T-cell (primary cell): ENCODE measurements at regions of chr6 and their contacts with region 1.

Region 1: GRCh38 chr6:722077-722524 is 29.2 kb upstream of the EXOC2 start:
- DNase-seq: peak; percentile 11 to 82 (median 58)
- ATAC-seq: peak; percentile 69 to 84 (median 82)
- H3K4me3 ChIP-seq: no peak overlapping the region
- H3K4me3 Mint-ChIP-seq: no peak overlapping the region
- H3K27ac ChIP-seq: no peak overlapping the region
- H3K27ac Mint-ChIP-seq: no peak overlapping the region
- H3K4me1 ChIP-seq: peaks cover 0 to 2% of the 10 kb centered on the region in 2 experiments
- H3K4me1 Mint-ChIP-seq: peaks cover 0 to 8% (median 7%) of the 10 kb centered on the region in 3 donors
- H3K27me3 ChIP-seq: peaks cover 7 to 8% of the 10 kb centered on the region in 2 experiments
- H3K27me3 Mint-ChIP-seq: peaks cover 6 to 18% of the 10 kb centered on the region in 2 donors

Region 2: GRCh38 chr6:710601-711571 is 11.2 kb before region 1 on chr6:
- CTCF ChIA-PET with region 1: interaction called, 4 to 11 read pairs
- POLR2A ChIA-PET with region 1: no interaction called
- DNase-seq: peak in 34 of 35 experiments; percentile 10 to 75 (median 28)
- ATAC-seq: peak; percentile 88 to 90 (median 89)
- H3K4me3 ChIP-seq: peak overlapping the region; percentile 68 to 79
- H3K4me3 Mint-ChIP-seq: peak overlapping the region; percentile 96 to 100 (median 98)
- H3K27ac ChIP-seq: peak overlapping the region; percentile 80
- H3K27ac Mint-ChIP-seq: peak overlapping the region; percentile 99
- H3K4me1 ChIP-seq: peaks cover 6% of the 10 kb centered on the region in 2 experiments
- H3K4me1 Mint-ChIP-seq: peaks cover 18 to 28% (median 23%) of the 10 kb centered on the region in 3 donors
- H3K27me3 ChIP-seq: peaks cover 0 to 10% of the 10 kb centered on the region in 2 experiments
- H3K27me3 Mint-ChIP-seq: peaks cover 2 to 11% of the 10 kb centered on the region in 2 donors

Region 3: DNA sequence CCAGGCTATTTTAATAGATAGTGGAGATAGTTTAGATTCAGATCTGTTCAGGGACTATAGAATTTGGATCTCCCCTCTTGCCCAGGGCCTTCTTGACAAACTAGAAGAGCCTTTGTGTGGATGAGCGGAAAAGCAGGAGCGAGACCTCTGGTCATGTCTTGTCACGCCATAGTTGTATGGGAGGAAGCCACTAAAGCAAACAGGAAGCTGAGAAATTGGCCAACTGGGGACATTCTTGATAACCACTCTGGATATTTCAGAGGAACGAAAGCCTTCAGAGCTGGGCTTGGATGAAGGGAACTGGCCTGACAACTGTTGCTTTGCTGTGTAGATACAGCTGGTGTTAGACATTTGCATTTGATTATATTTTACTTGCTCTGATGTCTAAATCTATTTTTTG is 24.9 kb after region 1 on chr6:
- CTCF ChIA-PET with region 1: no interaction called
- POLR2A ChIA-PET with region 1: no interaction called
- DNase-seq: no peak
- ATAC-seq: no peak
- H3K4me3 ChIP-seq: no peak overlapping the region
- H3K4me3 Mint-ChIP-seq: no peak overlapping the region
- H3K27ac ChIP-seq: no peak overlapping the region
- H3K27ac Mint-ChIP-seq: no peak overlapping the region
- H3K4me1 ChIP-seq: no peaks in the 10 kb centered on the region
- H3K4me1 Mint-ChIP-seq: no peaks in the 10 kb centered on the region
- H3K27me3 ChIP-seq: no peaks in the 10 kb centered on the region
- H3K27me3 Mint-ChIP-seq: peaks cover 0 to 9% of the 10 kb centered on the region in 2 donors